ENCODE measurements at regions of chr4 and their contacts with region 1.

Region 1: DNA sequence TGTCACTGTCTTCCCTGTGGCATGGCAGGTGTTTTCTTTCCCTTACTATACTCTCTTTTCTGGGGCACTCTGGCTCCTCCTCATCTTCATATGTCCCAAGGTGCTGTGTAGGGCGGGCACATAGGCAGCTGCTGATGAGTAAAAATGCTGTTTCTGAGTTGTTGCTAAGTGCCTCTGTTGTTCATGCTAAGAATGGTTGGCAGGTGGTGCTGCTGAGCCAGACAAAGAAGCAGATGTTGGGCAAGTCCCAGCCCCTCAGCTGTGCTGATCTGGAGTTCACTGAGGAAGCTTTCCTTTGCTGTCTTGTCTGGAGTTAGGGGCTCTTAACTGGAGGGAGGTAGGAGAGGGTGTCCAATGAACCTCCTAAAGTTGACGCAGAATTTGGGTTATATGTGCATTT is 40.6 kb downstream of the HADH start:
- DNase-seq: peak; percentile 90
- H3K4me3 ChIP-seq: no peak overlapping the region
- H3K27ac ChIP-seq: peak overlapping the region; percentile 62
- H3K4me1 ChIP-seq: peaks cover 69% of the 10 kb centered on the region
- CTCF ChIP-seq: peak; percentile 92

Region 2: GRCh38 chr4:108018040-108018883 is 12.1 kb before region 1 on chr4:
- CTCF ChIA-PET with region 1: interaction called, 12 read pairs
- POLR2A ChIA-PET with region 1: interaction called, 9 read pairs
- intact Hi-C with region 1: no loop called
- DNase-seq: peak; percentile 80
- H3K4me3 ChIP-seq: no peak overlapping the region
- H3K27ac ChIP-seq: no peak overlapping the region
- H3K4me1 ChIP-seq: peaks cover 5% of the 10 kb centered on the region
- CTCF ChIP-seq: peak; percentile 98

Region 3: GRCh38 chr4:108118490-108118889 is 88.2 kb after region 1 on chr4:
- CTCF ChIA-PET with region 1: no interaction called
- POLR2A ChIA-PET with region 1: interaction called, 13 read pairs
- intact Hi-C with region 1: loop called (anchors 2 kb)
- DNase-seq: peak; percentile 20
- H3K4me3 ChIP-seq: no peak overlapping the region
- H3K27ac ChIP-seq: peak overlapping the region; percentile 0
- H3K4me1 ChIP-seq: peaks cover 77% of the 10 kb centered on the region
- CTCF ChIP-seq: no peak

Region 4: GRCh38 chr4:108172753-108173598 is 142.6 kb after region 1 on chr4:
- CTCF ChIA-PET with region 1: interaction called, 3 read pairs
- POLR2A ChIA-PET with region 1: interaction called, 205 read pairs
- intact Hi-C with region 1: no loop called
- DNase-seq: peak; percentile 64
- H3K4me3 ChIP-seq: peak overlapping the region; percentile 67
- H3K27ac ChIP-seq: no peak overlapping the region
- H3K4me1 ChIP-seq: peaks cover 49% of the 10 kb centered on the region
- CTCF ChIP-seq: no peak; the same call in 1 of the 2 replicates

Region 5: GRCh38 chr4:108355186-108355901 is 325.0 kb after region 1 on chr4:
- CTCF ChIA-PET with region 1: no interaction called
- POLR2A ChIA-PET with region 1: interaction called, 3 read pairs
- intact Hi-C with region 1: loop called (anchors 5 kb)
- DNase-seq: no peak
- H3K4me3 ChIP-seq: no peak overlapping the region
- H3K27ac ChIP-seq: no peak overlapping the region
- H3K4me1 ChIP-seq: peaks cover 18% of the 10 kb centered on the region
- CTCF ChIP-seq: no peak

Region 6: GRCh38 chr4:108492816-108493595 is 462.7 kb after region 1 on chr4:
- CTCF ChIA-PET with region 1: no interaction called
- POLR2A ChIA-PET with region 1: no interaction called
- intact Hi-C with region 1: loop called (anchors 1 kb)
- DNase-seq: peak; percentile 39
- H3K4me3 ChIP-seq: no peak overlapping the region
- H3K27ac ChIP-seq: no peak overlapping the region
- H3K4me1 ChIP-seq: no peaks in the 10 kb centered on the region
- CTCF ChIP-seq: peak; percentile 73

Region 7: GRCh38 chr4:108570993-108571569 is 540.7 kb after region 1 on chr4:
- CTCF ChIA-PET with region 1: no interaction called
- POLR2A ChIA-PET with region 1: interaction called, 24 read pairs
- intact Hi-C with region 1: loop called (anchors 1 kb)
- DNase-seq: no peak
- H3K4me3 ChIP-seq: no peak overlapping the region
- H3K27ac ChIP-seq: no peak overlapping the region
- H3K4me1 ChIP-seq: no peaks in the 10 kb centered on the region
- CTCF ChIP-seq: no peak